Psoas muscle (tissue), 8 donors: ENCODE measurements at regions of chr22 and their contacts with region 1.

Region 1: GRCh38 chr22:40636380-40637182 is at the start of gene MRTFA:
- DNase-seq: peak; percentile 100
- ATAC-seq: peak; percentile 94 to 97 (median 95)
- H3K4me3 ChIP-seq: peak within 1 kb of the TSS; percentile 93
- H3K27ac ChIP-seq: peak within 1 kb of the TSS; percentile 89
- H3K4me1 ChIP-seq: peaks cover 26% of the 10 kb centered on the region
- H3K27me3 ChIP-seq: no peaks in the 10 kb centered on the region
- CTCF ChIP-seq: no peak
- total RNA-seq, gene MRTFA: 15.7 to 24.0 (median 20.0) TPM

Region 2: DNA sequence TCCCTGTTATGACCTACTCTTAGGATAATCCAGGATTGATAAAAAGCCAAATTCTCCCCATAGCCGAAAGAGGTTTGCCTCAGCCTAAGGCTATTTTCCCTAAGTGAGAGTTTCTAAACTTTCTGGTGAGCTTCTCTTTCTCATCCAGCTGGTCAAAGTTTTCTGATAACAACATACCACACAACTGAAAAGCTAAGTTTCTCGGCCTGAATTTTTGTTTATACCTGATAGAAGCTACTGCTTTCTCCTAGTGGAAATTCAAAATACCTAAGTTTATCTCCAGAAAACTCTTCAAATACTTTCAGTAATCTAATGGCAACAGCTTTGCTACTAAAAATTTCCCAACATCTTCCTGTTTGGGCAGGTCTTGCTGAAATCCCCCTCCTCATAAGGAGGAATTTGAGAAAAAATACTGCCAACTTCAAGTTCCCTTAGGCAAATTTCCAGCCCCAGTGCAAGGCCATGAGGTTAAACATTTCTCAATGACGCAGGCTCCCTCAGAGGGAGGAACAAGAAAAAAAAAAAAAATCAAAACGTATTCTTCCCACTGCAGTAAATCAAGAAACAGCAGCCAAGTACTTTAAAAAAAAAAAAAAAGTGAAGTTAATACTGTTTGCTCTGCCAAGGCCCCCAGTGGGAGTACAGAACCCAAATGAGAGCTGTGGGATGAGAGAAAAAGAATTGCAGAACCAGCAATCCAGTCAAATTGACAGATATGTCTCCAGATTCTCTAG is 127.0 kb before region 1 on chr22:
- intact Hi-C with region 1: loop called in 1 of 2 experiments (anchors 5 kb)
- DNase-seq: peak; percentile 36 to 67
- ATAC-seq: peak in 2 of 4 donors; percentile 7 to 34
- H3K4me3 ChIP-seq: no peak overlapping the region
- H3K27ac ChIP-seq: peak overlapping the region; percentile 75
- H3K4me1 ChIP-seq: peaks cover 58% of the 10 kb centered on the region
- H3K27me3 ChIP-seq: no peaks in the 10 kb centered on the region
- CTCF ChIP-seq: no peak

Region 3: DNA sequence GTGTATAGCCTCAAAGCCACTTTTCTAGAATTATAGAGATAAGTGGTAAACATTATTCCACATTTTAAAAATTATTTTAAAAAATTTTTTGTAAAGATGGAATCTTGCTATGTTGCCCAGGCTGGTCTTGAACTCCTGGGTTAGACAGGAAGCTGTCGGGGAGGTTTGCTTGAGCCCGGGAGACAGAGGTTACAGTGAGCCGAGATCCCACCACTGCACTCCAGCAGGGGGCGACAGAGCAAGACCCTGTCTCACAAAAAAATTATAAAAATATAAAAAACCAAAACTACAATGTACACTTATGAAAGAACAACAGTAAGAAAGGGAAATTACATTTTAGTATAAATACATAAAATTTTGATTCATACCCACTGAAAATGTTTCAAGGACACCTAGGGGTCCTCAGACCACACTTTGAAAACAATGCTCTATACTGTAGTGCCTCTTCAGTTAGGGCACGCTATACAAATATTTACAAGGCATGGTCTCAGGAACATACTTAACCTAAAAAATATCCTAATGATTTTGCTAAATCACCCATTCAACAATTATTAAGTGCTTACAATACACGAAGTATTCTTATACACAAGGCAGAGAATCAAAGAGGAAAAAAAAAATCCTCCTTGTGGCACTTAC is 111.2 kb before region 1 on chr22:
- intact Hi-C with region 1: loop called in 1 of 2 experiments (anchors 5 kb)
- DNase-seq: peak; percentile 51 to 61
- ATAC-seq: peak in 3 of 4 donors; percentile 57 to 70 (median 65)
- H3K4me3 ChIP-seq: no peak overlapping the region
- H3K27ac ChIP-seq: no peak overlapping the region
- H3K4me1 ChIP-seq: peaks cover 4% of the 10 kb centered on the region
- H3K27me3 ChIP-seq: no peaks in the 10 kb centered on the region
- CTCF ChIP-seq: peak; percentile 68